IMR-90 (cell line): ENCODE measurements at regions of chr12 and their contacts with region 1.

Region 1: GRCh38 chr12:79634957-79635471 is 55.8 kb downstream of the PAWR start:
- DNase-seq: no peak
- ATAC-seq: no peak
- H3K4me3 ChIP-seq: no peak overlapping the region
- H3K27ac ChIP-seq: no peak overlapping the region
- H3K4me1 ChIP-seq: peaks cover 2% of the 10 kb centered on the region; the same call in 1 of the 2 replicates
- H3K27me3 ChIP-seq: no peaks in the 10 kb centered on the region
- CTCF ChIP-seq: no peak
- POLR2A ChIP-seq: no peak
- RAD21 ChIP-seq: no peak

Region 2: GRCh38 chr12:79407671-79408622 is 227.1 kb before region 1 on chr12:
- CTCF ChIA-PET with region 1: no interaction called
- POLR2A ChIA-PET with region 1: no interaction called
- dilution Hi-C with region 1: no loop called
- in situ Hi-C with region 1: no loop called
- intact Hi-C with region 1: no loop called
- DNase-seq: peak; percentile 91
- ATAC-seq: peak; percentile 91
- H3K4me3 ChIP-seq: no peak overlapping the region
- H3K27ac ChIP-seq: peak overlapping the region; percentile 45; the same call in 1 of the 2 replicates
- H3K4me1 ChIP-seq: peaks cover 14% of the 10 kb centered on the region
- H3K27me3 ChIP-seq: no peaks in the 10 kb centered on the region
- CTCF ChIP-seq: peak; percentile 97
- POLR2A ChIP-seq: peak; percentile 58; the same call in 1 of the 2 replicates
- RAD21 ChIP-seq: peak; percentile 96

Region 3: DNA sequence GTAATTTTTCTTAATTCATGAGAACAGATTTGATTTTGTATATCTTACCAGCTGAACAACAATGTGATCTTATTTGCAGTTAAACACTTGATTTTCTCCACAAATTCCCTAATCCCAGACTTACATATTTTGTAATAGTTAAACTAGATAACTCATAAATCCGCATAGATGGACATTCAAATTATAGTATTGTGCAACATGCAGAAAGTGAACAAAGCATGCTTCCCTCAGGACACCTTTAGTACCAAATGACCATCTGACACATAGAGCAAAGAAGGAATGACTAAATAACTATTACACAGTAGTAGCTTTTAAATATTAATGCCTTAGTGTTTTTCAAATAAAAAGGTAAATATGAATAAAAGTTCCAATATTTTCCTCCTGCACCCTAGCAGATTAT is 33.1 kb before region 1 on chr12:
- CTCF ChIA-PET with region 1: no interaction called
- POLR2A ChIA-PET with region 1: no interaction called
- dilution Hi-C with region 1: no loop called
- in situ Hi-C with region 1: no loop called
- intact Hi-C with region 1: loop called (anchors 5 kb)
- DNase-seq: no peak
- ATAC-seq: no peak
- H3K4me3 ChIP-seq: no peak overlapping the region
- H3K27ac ChIP-seq: no peak overlapping the region
- H3K4me1 ChIP-seq: peaks cover 6% of the 10 kb centered on the region
- H3K27me3 ChIP-seq: no peaks in the 10 kb centered on the region
- CTCF ChIP-seq: no peak
- POLR2A ChIP-seq: no peak
- RAD21 ChIP-seq: no peak

Region 4: DNA sequence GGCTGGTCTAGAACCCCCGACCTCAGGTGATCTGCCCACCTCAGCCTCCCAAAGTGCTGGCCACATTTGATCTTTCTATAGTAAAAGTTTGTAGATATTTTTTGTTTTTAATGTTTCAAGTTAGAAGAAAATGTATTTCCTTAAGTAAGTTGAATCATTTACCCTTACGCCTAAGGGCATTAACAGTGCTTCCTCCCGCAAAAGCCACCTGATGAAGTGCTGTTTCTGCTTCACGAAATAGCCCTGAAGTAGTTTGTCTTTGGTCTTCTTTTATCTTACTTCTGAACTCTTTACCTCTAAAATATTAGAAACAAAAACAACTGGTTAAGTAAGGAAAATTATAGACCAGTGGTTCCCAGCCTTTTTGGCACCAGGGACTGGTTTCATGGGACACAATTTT is 33.1 kb after region 1 on chr12:
- CTCF ChIA-PET with region 1: no interaction called
- POLR2A ChIA-PET with region 1: no interaction called
- dilution Hi-C with region 1: no loop called
- in situ Hi-C with region 1: no loop called
- intact Hi-C with region 1: no loop called
- DNase-seq: no peak
- ATAC-seq: no peak
- H3K4me3 ChIP-seq: no peak overlapping the region
- H3K27ac ChIP-seq: no peak overlapping the region
- H3K4me1 ChIP-seq: peaks cover 4% of the 10 kb centered on the region
- H3K27me3 ChIP-seq: no peaks in the 10 kb centered on the region
- CTCF ChIP-seq: no peak
- POLR2A ChIP-seq: no peak
- RAD21 ChIP-seq: no peak